Body of pancreas (tissue), 4 donors: ENCODE measurements at regions of chr18 and their contacts with region 1.

Region 1: GRCh38 chr18:72762515-72763122 is 105.2 kb downstream of the NETO1 start:
- DNase-seq: peak in 1 of 4 donors; percentile 9
- ATAC-seq: peak; percentile 68
- H3K4me3 ChIP-seq: no peak overlapping the region
- H3K27ac ChIP-seq: no peak overlapping the region
- H3K4me1 ChIP-seq: no peaks in the 10 kb centered on the region
- H3K27me3 ChIP-seq: no peaks in the 10 kb centered on the region
- CTCF ChIP-seq: peak; percentile 41 to 89 (median 73)
- POLR2A ChIP-seq: no peak

Region 2: DNA sequence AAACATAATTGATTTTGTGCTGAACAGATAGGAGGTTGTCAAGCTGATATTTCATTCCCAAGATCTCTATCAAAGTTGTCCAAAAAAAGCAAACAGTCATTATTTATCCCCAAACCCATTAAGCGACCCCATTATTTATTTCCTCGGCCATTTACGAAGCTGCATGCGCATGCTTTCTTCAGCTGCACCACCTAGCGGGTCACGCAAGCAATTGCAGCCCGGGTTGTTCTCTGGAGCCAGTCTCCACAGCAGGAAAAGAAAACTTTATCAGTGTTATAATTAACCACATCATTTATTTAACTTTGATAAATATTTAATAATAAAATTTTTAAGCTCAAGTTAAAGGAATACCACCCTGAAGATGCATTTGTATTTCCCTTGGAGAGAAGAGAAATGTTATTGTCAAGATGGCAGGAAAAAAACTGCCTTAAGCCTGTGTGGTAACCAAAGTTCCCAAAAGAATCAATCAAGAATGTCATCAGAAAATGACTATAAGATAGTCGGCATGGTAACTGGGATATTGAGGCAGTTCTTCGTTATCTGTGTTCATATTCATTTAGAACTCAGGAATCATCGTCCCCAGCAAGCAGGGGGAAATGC is 1080.3 kb after region 1 on chr18:
- intact Hi-C with region 1: loop called (anchors 10 kb)
- DNase-seq: peak; percentile 42 to 55 (median 48)
- ATAC-seq: peak; percentile 67
- H3K4me3 ChIP-seq: no peak overlapping the region
- H3K27ac ChIP-seq: no peak overlapping the region
- H3K4me1 ChIP-seq: peaks cover 5% of the 10 kb centered on the region
- H3K27me3 ChIP-seq: peaks cover 0 to 4% of the 10 kb centered on the region in 2 donors
- CTCF ChIP-seq: peak; percentile 75 to 99 (median 84)
- POLR2A ChIP-seq: no peak